ENCODE measurements at regions of chr16 and their contacts with region 1.

Region 1: DNA sequence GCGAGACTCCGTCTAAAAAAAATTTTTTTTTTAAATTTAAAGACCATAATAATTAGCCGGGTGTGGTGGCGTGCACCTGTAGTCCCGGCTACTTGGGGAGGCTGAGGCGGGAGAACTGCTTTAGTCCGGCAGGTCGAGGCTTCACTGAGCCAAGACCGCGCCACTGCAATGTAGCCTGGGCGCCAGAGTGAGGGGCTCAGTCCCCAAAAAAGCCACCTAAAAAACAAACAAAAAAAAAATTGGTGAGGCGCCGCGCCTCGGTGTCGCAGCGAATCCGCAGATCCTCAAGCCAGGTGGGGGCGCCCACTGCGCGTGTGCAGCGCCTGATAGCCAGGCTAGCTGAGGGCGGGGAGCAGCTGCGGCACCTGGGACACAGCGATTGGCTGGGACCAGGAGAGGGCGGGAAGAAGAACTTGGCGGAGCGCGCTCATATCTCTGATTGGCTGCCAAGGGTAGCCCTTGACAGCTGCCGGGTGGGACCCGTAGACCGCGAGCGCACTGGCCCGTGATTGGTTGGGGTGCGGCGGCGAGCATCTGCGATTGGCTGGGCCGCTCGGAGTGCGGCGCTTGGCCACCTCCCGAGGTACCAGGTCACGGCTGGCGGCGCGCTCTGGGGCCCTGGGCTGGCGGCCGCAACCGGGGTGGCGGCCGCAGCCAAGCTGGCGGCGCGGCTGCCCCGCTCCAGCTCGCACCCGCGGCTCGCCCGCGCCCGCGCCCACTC is 9.0 kb upstream of the CLDN9 start:
- DNase-seq: peak; percentile 95 to 98
- H3K4me3 ChIP-seq: peak overlapping the region in 1 of 4 experiments; percentile 58; a peak in 1 of 8 replicates
- H3K27ac ChIP-seq: no peak overlapping the region
- H3K4me1 ChIP-seq: peaks cover 11 to 33% (median 27%) of the 10 kb centered on the region in 4 experiments
- H3K27me3 ChIP-seq: no peaks in the 10 kb centered on the region
- CTCF ChIP-seq: peak; percentile 63 to 93 (median 71)
- EP300 ChIP-seq: peak in 1 of 2 experiments; percentile 36; a peak in 1 of 3 replicates
- POLR2A ChIP-seq: 0 out of 3 replicates have a peak, but pooled peaks of 1 of the 2 experiments have one; percentile 32
- RAD21 ChIP-seq: peak; percentile 85 to 92

Region 2: GRCh38 chr16:2703241-2703745 is 300.4 kb before region 1 on chr16:
- CTCF ChIA-PET with region 1: no interaction called
- POLR2A ChIA-PET with region 1: no interaction called
- DNase-seq: no peak
- H3K4me3 ChIP-seq: no peak overlapping the region
- H3K27ac ChIP-seq: no peak overlapping the region
- H3K4me1 ChIP-seq: no peaks in the 10 kb centered on the region
- H3K27me3 ChIP-seq: no peaks in the 10 kb centered on the region
- CTCF ChIP-seq: no peak
- EP300 ChIP-seq: no peak
- POLR2A ChIP-seq: no peak
- RAD21 ChIP-seq: no peak

Region 3: DNA sequence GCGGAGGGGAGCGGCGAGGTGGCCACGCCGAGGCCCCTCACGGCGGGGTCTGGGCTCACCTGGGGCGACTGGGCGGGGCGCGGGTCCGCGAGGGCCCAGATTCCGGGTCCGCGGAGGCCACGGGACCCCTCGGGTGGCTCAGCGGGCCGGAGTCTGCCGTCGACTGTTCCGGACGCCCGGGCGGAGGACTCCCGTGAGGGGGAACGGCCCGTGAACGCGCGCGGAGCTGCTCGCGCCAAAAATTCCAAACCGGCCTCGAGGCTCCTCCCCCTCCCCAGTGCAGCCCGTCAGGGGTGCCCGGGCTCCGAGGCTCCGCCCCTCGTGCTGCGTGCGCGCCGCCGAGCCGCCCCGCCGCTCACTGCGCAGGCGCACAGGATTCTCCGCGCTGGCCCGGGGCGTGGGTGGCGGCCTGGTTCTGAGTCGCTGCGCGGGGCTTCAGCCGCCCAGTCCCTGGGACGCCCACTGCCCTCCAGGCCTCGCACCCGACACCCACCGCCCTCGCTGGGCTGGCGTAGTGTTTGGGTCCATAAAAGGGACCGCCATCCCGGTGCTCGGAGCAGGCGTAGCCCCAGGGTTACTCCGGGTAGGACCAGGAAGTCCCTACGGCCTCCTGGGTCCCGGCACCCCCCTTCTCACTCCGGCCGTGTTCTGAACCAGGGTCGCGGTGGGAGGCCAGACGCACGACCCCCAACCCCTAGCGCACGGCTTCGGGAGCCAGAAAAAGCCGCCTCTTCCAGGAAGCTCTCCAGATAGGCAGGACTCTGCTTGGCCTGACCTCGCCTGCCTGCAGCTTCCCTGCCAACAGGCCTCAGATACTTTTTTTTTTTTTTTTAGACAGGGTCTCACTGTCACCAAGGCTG is 23.3 kb before region 1 on chr16 and contains the start of gene PKMYT1:
- CTCF ChIA-PET with region 1: interaction called, 11 read pairs
- POLR2A ChIA-PET with region 1: interaction called, 34 read pairs
- DNase-seq: peak in 1 of 2 experiments; percentile 95
- H3K4me3 ChIP-seq: peak within 1 kb of the TSS; percentile 68 to 79 (median 73)
- H3K27ac ChIP-seq: peak within 1 kb of the TSS; percentile 91
- H3K4me1 ChIP-seq: peaks cover 3 to 23% (median 14%) of the 10 kb centered on the region in 4 experiments
- H3K27me3 ChIP-seq: no peaks in the 10 kb centered on the region; a peak in 1 of 7 replicates
- CTCF ChIP-seq: no peak
- EP300 ChIP-seq: no peak
- POLR2A ChIP-seq: peak in 1 of 2 experiments; percentile 79; a peak in 2 of 3 replicates
- RAD21 ChIP-seq: no peak
- total RNA-seq, gene PKMYT1: 74.7 and 83.6 TPM in 2 replicates

Region 4: GRCh38 chr16:2987839-2988238 is 15.9 kb before region 1 on chr16:
- CTCF ChIA-PET with region 1: interaction called, 24 read pairs
- POLR2A ChIA-PET with region 1: interaction called, 34 read pairs
- DNase-seq: no peak
- H3K4me3 ChIP-seq: no peak overlapping the region
- H3K27ac ChIP-seq: no peak overlapping the region
- H3K4me1 ChIP-seq: peaks cover 3 to 28% (median 23%) of the 10 kb centered on the region in 4 experiments
- H3K27me3 ChIP-seq: no peaks in the 10 kb centered on the region; a peak in 1 of 7 replicates
- CTCF ChIP-seq: no peak
- EP300 ChIP-seq: no peak
- POLR2A ChIP-seq: no peak
- RAD21 ChIP-seq: no peak

Measured in H1 (cell line).